Endothelial cell of umbilical vein (primary cell): ENCODE measurements at regions of chr18 and their contacts with region 1.

Region 1: DNA sequence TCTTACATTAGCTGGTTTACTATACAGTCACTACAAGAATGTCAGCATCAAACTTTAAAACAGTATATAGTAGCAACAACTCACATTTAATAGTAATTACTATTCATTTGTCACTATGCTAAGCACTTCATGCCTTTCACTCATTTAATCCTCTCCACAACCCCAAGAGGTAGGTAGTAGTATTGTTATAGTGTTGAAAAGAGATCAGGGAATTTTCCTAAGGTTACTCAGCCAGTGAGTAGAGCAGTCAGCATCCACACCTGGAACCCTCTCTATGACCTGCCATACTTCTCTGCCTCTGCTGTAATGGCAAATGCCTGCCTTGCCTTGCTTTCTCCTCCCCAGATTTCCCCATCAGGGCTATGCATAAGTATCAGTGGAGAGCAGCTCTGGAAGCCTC is 24.8 kb downstream of the SKOR2 start:
- DNase-seq: no peak
- H3K4me3 ChIP-seq: no peak overlapping the region
- H3K27ac ChIP-seq: no peak overlapping the region
- H3K4me1 ChIP-seq: no peaks in the 10 kb centered on the region
- H3K27me3 ChIP-seq: peaks cover 0 to 3% of the 10 kb centered on the region in 2 experiments
- CTCF ChIP-seq: no peak
- POLR2A ChIP-seq: no peak

Region 2: GRCh38 chr18:47087676-47088075 is 139.0 kb before region 1 on chr18:
- CTCF ChIA-PET with region 1: no interaction called
- POLR2A ChIA-PET with region 1: no interaction called
- dilution Hi-C with region 1: no loop called
- intact Hi-C with region 1: no loop called
- DNase-seq: no peak
- H3K4me3 ChIP-seq: no peak overlapping the region
- H3K27ac ChIP-seq: no peak overlapping the region
- H3K4me1 ChIP-seq: no peaks in the 10 kb centered on the region
- H3K27me3 ChIP-seq: no peaks in the 10 kb centered on the region
- CTCF ChIP-seq: no peak
- POLR2A ChIP-seq: no peak

Region 3: DNA sequence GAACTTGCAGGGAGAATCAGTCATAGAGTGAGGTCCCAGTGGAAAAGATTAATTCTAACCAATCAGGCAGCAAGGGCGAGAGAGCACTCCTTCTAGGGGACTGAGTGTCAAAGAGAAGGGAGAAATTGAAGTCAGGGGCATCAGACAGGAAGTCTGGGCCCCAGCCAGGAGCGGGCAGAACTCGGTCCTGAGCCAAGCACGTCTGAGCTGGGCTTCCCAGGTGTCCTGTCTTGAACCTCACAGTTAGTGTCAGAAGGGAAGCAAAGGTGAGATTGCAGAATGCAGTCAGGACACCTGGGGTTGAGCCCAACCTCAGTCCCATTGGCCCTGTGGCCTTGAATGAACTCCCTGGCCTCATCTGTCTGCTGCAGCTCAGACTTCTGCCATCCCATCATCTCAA is 482.9 kb after region 1 on chr18:
- CTCF ChIA-PET with region 1: no interaction called
- POLR2A ChIA-PET with region 1: interaction called, 12 read pairs
- dilution Hi-C with region 1: no loop called
- intact Hi-C with region 1: no loop called
- DNase-seq: no peak
- H3K4me3 ChIP-seq: no peak overlapping the region
- H3K27ac ChIP-seq: no peak overlapping the region
- H3K4me1 ChIP-seq: no peaks in the 10 kb centered on the region
- H3K27me3 ChIP-seq: no peaks in the 10 kb centered on the region
- CTCF ChIP-seq: no peak
- POLR2A ChIP-seq: no peak